Activated CD4-positive, alpha-beta T cell treated with anti-CD3 and anti-CD28 coated beads for 36 hours (primary cell): ENCODE measurements at regions of chr12 and their contacts with region 1.

Region 1: GRCh38 chr12:15268927-15269552 is 47.8 kb upstream of the RERG start:
- DNase-seq: peak; percentile 56
- ATAC-seq: peak; percentile 71
- H3K4me3 Mint-ChIP-seq: no peak overlapping the region
- H3K27ac Mint-ChIP-seq: no peak overlapping the region
- H3K4me1 Mint-ChIP-seq: no peaks in the 10 kb centered on the region
- H3K27me3 Mint-ChIP-seq: peaks cover 2% of the 10 kb centered on the region

Region 2: DNA sequence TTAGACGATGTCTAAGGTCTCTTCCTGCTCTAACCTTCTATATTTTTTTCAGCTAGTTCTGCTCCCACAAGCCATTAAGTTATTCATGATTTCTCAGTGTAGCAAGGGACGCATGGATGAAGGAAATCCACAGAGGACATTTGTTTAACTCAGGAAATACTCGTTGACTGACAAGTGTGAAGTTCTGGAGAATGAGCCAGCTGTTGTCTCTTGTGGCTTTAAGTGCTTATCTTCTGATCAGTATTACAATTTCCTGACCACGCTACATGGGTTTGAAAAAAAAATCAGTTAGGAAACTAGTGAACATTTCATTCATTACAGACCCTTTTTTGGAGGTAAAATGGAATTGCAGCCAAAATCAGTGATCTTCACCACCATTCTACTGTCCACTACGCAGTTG is 625.8 kb before region 1 on chr12:
- CTCF ChIA-PET with region 1: no interaction called
- POLR2A ChIA-PET with region 1: no interaction called
- intact Hi-C with region 1: loop called in 1 of 2 experiments (anchors 5 kb)
- DNase-seq: no peak
- ATAC-seq: no peak
- H3K4me3 Mint-ChIP-seq: peak overlapping the region; percentile 25
- H3K27ac Mint-ChIP-seq: no peak overlapping the region
- H3K4me1 Mint-ChIP-seq: peaks cover 24% of the 10 kb centered on the region
- H3K27me3 Mint-ChIP-seq: no peaks in the 10 kb centered on the region

Region 3: GRCh38 chr12:14723763-14724162 is 545.3 kb before region 1 on chr12:
- CTCF ChIA-PET with region 1: interaction called, 9 read pairs
- POLR2A ChIA-PET with region 1: no interaction called
- intact Hi-C with region 1: loop called (anchors 1 to 2 kb)
- DNase-seq: peak; percentile 72
- ATAC-seq: peak; percentile 80
- H3K4me3 Mint-ChIP-seq: no peak overlapping the region
- H3K27ac Mint-ChIP-seq: no peak overlapping the region
- H3K4me1 Mint-ChIP-seq: no peaks in the 10 kb centered on the region
- H3K27me3 Mint-ChIP-seq: peaks cover 5% of the 10 kb centered on the region

Region 4: DNA sequence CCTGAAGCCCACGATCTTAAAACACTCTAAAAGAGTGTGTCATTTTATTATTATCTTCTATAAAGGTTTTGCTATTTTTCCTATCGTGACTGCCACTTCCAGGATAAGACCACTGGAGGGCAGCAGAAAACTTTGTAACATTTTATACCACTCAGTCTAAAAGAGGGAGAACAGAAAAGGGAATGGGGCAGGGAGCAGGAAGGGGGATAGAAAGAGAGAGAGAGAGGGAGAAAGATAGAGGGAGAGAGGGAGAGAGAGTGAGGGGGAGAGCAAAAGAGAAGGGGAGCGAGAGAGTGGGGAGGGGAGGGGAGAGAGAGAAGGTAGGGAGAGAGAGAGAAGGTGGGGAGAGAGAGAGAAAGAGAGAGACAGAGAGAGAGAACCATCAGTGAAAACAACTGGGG is 423.7 kb before region 1 on chr12:
- CTCF ChIA-PET with region 1: no interaction called
- POLR2A ChIA-PET with region 1: no interaction called
- intact Hi-C with region 1: loop called (anchors 1 to 10 kb)
- DNase-seq: peak; percentile 46
- ATAC-seq: peak; percentile 58
- H3K4me3 Mint-ChIP-seq: no peak overlapping the region
- H3K27ac Mint-ChIP-seq: no peak overlapping the region
- H3K4me1 Mint-ChIP-seq: peaks cover 11% of the 10 kb centered on the region
- H3K27me3 Mint-ChIP-seq: no peaks in the 10 kb centered on the region

Region 5: DNA sequence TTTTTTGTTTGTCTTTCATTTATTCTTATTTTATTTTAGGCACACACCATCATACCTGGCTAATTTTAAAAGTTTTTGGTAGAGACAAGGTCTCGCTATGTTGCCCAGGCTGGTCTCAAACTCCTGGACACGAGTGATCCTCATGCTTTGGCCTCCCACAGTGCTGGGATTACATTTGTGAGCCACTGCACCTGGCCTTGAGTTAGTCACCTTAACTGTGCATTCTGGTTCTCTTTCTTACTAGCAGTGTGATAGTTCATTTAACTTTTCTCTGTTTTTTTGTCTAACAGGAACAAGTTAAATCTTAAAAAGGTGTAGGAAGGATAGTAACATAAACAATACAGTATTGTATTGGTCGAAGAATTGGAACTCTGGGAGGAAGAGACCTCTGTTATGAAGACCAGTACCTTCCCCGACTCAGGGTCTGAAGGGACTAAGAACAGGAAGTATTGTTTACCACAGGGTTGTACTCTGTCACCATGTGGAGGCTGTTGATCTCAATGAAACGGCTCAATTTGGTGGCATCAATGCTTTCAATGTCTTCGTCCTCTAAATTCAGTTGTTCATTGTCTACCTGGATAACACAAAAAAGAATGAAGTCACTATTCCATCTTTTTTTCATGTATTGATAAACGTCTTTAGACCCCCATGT is 348.4 kb before region 1 on chr12:
- CTCF ChIA-PET with region 1: no interaction called
- POLR2A ChIA-PET with region 1: no interaction called
- intact Hi-C with region 1: no loop called
- DNase-seq: no peak
- ATAC-seq: peak; percentile 79
- H3K4me3 Mint-ChIP-seq: no peak overlapping the region
- H3K27ac Mint-ChIP-seq: peak overlapping the region; percentile 8
- H3K4me1 Mint-ChIP-seq: peaks cover 16% of the 10 kb centered on the region
- H3K27me3 Mint-ChIP-seq: no peaks in the 10 kb centered on the region

Region 6: DNA sequence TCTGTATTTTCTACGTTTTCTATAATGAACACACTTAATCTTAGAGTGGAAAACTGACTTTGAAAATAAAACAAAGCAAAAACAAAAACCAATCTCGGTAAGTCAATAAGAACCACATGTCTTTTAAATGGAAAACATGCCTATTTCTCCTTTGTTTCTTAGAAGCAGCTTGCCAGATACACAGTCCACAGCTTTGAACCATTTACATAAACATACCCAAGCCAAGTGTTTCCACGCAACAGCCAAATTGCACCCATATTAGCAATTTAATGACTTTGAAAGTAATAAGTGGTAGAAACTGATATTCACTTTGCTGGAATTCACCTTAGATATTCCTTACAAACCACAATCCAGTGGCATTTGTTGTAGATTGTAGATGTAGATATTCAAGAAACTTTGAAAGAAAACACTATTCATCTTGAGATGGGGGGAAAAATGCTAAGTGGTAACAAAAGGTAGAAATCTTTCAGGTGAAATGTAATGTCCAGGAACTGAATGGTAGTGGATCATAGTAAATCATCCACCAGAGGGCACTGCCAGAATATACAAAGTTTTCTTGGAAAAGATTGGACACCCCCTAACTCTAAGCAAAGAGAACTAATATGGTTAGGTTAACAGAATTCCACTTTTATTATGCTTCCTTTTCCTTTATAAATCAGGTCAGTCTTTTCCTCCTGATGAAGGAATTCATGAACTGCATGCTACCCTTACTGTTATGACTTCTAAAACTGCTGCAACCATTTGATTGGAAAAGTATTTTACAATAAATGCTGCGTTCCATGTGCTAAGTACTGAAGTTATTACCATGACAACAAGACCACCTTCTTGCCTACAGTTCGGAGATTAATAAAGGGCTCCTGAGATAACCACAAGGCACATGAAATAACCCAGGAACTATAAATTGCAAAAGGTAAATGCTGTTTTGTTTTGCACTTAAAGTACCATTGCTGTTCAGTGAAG is 117.6 kb before region 1 on chr12:
- CTCF ChIA-PET with region 1: interaction called, 3 read pairs
- POLR2A ChIA-PET with region 1: no interaction called
- intact Hi-C with region 1: loop called (anchors 5 kb)
- DNase-seq: no peak
- ATAC-seq: no peak
- H3K4me3 Mint-ChIP-seq: no peak overlapping the region
- H3K27ac Mint-ChIP-seq: no peak overlapping the region
- H3K4me1 Mint-ChIP-seq: no peaks in the 10 kb centered on the region
- H3K27me3 Mint-ChIP-seq: peaks cover 2% of the 10 kb centered on the region

Region 7: DNA sequence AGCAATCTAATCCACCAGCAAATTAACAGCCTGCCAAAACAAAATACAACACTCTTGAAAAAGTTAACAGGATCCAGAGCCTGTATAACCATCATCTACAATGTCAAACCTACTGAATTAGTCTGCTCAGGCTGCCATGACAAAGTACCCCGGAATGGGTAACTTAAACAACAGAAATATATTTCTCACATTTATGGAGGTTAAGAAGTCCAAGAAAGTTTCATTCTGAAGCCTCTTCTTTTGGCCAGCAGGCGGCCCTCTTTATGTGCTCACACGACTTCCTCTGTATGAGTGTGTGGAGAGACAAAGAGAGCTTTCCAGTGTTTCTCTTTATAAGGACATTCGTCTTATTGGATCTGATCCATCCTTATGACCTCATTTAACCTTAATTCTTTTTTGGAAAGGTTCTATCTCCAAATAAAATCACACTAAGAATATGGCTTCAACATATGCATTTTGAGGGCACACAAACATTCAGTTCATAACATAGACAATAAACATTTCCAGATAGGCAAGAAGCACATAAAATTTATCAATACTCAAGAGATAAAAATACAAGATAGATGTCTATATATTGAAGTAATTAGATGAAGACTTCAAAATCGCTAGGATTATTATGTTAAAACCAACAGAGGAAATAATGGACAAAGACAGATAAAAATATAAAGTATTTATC is 41.9 kb before region 1 on chr12:
- CTCF ChIA-PET with region 1: interaction called, 4 read pairs
- POLR2A ChIA-PET with region 1: no interaction called
- intact Hi-C with region 1: loop called in 1 of 2 experiments (anchors 1 kb)
- DNase-seq: peak; percentile 46
- ATAC-seq: peak; percentile 33
- H3K4me3 Mint-ChIP-seq: no peak overlapping the region
- H3K27ac Mint-ChIP-seq: no peak overlapping the region
- H3K4me1 Mint-ChIP-seq: no peaks in the 10 kb centered on the region
- H3K27me3 Mint-ChIP-seq: peaks cover 36% of the 10 kb centered on the region